ENCODE measurements at regions of chr13 and their contacts with region 1.

Region 1: DNA sequence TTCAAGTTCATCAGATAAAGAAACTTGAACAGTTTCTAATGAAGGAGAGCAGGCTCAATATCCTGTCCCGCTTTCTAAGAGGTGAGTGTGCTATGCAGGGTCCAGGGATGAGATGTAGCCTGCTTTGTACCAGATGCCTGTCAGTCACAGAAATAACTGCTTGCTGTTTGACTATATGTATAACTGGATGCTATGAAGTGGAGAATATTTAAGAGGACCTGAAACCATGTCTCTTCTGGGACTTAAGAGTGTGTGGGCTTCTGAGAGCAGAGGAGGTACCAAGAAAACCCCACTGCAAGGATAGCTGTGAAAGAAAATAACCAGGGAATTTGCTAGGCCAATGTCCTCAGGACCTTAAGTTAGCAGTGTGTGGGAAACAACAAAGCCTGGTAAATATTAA is 246.3 kb upstream of the RFC3 start:
- DNase-seq: no peak
- H3K4me3 Mint-ChIP-seq: no peak overlapping the region
- H3K27ac Mint-ChIP-seq: no peak overlapping the region
- H3K4me1 Mint-ChIP-seq: no peaks in the 10 kb centered on the region
- H3K27me3 Mint-ChIP-seq: no peaks in the 10 kb centered on the region
- CTCF ChIP-seq: no peak

Region 2: GRCh38 chr13:33454844-33455705 is 116.5 kb before region 1 on chr13:
- CTCF ChIA-PET with region 1: no interaction called
- POLR2A ChIA-PET with region 1: no interaction called
- intact Hi-C with region 1: no loop called
- DNase-seq: no peak
- H3K4me3 Mint-ChIP-seq: no peak overlapping the region
- H3K27ac Mint-ChIP-seq: no peak overlapping the region
- H3K4me1 Mint-ChIP-seq: no peaks in the 10 kb centered on the region
- H3K27me3 Mint-ChIP-seq: no peaks in the 10 kb centered on the region
- CTCF ChIP-seq: no peak

Region 3: GRCh38 chr13:33560726-33561125 is 10.9 kb before region 1 on chr13:
- CTCF ChIA-PET with region 1: no interaction called
- POLR2A ChIA-PET with region 1: interaction called, 5 read pairs
- intact Hi-C with region 1: loop called (anchors 1 kb)
- DNase-seq: no peak
- H3K4me3 Mint-ChIP-seq: no peak overlapping the region
- H3K27ac Mint-ChIP-seq: no peak overlapping the region
- H3K4me1 Mint-ChIP-seq: no peaks in the 10 kb centered on the region
- H3K27me3 Mint-ChIP-seq: no peaks in the 10 kb centered on the region
- CTCF ChIP-seq: no peak